ENCODE measurements at regions of chr12 and their contacts with region 1.

Region 1: DNA sequence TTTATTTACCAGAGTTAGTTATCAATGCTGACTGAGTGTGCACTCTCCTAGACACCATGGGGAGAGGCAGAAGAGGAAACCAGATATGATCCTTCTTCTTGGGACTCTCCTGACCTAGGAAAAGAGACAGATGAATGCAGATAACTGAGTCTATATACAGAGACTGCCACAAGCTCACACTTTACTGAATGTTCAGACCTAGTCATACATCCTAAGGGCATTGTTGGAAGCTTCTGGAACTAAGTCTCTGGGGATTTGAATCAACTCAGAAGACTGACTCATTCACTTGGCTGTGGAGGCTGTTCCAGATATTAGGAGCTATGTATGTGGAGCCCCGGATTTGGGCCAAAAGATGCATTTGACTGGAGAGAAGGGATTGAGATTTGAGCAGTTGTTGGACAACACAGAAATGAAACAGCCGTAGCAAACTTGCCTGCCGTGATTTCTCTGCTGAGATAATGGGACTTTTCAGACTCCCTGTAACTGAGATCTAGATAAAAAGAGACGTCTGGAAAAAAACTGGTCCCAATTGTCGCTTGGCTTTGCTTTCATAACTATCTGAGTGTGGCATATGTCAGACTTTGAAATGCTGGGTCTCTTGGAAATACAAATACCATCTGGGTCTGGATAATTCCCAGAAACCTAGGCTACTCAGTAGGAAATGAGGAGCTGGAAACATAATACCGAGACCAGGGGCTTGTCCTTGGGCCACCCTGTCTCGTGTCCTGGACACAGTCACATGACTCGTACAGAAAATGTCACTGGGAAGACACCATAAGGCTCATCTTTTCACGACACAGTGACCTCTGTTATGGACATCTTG is 396.8 kb downstream of the NUAK1 start:
- DNase-seq: peak; percentile 47
- H3K4me3 ChIP-seq: no peak overlapping the region
- H3K27ac ChIP-seq: no peak overlapping the region
- H3K4me1 ChIP-seq: peaks cover 32% of the 10 kb centered on the region
- H3K27me3 ChIP-seq: peaks cover 50 to 60% of the 10 kb centered on the region in 2 experiments
- CTCF ChIP-seq: no peak
- POLR2A ChIP-seq: no peak

Region 2: DNA sequence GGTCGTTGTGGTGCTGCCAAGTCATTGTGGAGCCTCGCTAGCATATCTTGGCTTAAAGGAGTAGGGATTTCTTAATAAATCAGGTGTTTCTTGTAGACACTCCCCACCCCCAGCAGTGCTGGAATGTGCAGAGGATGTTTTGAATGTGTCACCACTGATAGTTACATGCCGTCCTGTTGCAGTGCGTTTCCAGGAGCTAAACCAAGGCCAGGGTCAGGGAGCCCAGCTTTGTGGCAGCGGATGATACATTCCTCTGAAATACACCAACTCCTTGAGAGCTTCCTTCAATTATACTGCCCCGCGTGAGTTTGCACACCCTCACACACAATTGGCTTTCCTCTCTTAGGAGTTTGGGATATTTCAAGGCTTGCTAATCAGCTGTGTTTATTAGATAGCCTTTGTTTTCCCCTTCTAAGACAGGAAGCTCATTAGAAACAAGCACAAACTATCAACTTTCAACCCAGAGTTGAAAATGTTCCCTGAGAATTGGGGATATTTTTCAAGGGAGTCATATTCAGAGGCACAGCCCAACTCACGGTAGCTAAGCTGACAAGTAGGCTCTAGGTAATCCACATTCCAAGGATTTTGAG is 256.5 kb before region 1 on chr12:
- CTCF ChIA-PET with region 1: no interaction called
- POLR2A ChIA-PET with region 1: no interaction called
- dilution Hi-C with region 1: no loop called
- intact Hi-C with region 1: loop called (anchors 1 kb)
- DNase-seq: peak; percentile 99
- H3K4me3 ChIP-seq: no peak overlapping the region
- H3K27ac ChIP-seq: peak overlapping the region; percentile 74
- H3K4me1 ChIP-seq: peaks cover 100% of the 10 kb centered on the region
- H3K27me3 ChIP-seq: no peaks in the 10 kb centered on the region
- CTCF ChIP-seq: no peak
- POLR2A ChIP-seq: peak; percentile 90

Region 3: GRCh38 chr12:105705765-105706164 is 36.2 kb before region 1 on chr12:
- CTCF ChIA-PET with region 1: interaction called, 13 read pairs
- POLR2A ChIA-PET with region 1: no interaction called
- dilution Hi-C with region 1: no loop called
- intact Hi-C with region 1: loop called (anchors 1 kb)
- DNase-seq: peak; percentile 77
- H3K4me3 ChIP-seq: no peak overlapping the region
- H3K27ac ChIP-seq: no peak overlapping the region
- H3K4me1 ChIP-seq: peaks cover 9% of the 10 kb centered on the region
- H3K27me3 ChIP-seq: peaks cover 4 to 7% of the 10 kb centered on the region in 2 experiments
- CTCF ChIP-seq: peak; percentile 63 to 65
- POLR2A ChIP-seq: no peak

Region 4: GRCh38 chr12:105761075-105761474 is 19.1 kb after region 1 on chr12:
- CTCF ChIA-PET with region 1: interaction called, 4 read pairs
- POLR2A ChIA-PET with region 1: no interaction called
- dilution Hi-C with region 1: no loop called
- intact Hi-C with region 1: loop called (anchors 1 kb)
- DNase-seq: peak; percentile 72
- H3K4me3 ChIP-seq: no peak overlapping the region
- H3K27ac ChIP-seq: no peak overlapping the region
- H3K4me1 ChIP-seq: peaks cover 16% of the 10 kb centered on the region
- H3K27me3 ChIP-seq: peaks cover 0 to 23% of the 10 kb centered on the region in 2 experiments
- CTCF ChIP-seq: no peak
- POLR2A ChIP-seq: no peak

Region 5: DNA sequence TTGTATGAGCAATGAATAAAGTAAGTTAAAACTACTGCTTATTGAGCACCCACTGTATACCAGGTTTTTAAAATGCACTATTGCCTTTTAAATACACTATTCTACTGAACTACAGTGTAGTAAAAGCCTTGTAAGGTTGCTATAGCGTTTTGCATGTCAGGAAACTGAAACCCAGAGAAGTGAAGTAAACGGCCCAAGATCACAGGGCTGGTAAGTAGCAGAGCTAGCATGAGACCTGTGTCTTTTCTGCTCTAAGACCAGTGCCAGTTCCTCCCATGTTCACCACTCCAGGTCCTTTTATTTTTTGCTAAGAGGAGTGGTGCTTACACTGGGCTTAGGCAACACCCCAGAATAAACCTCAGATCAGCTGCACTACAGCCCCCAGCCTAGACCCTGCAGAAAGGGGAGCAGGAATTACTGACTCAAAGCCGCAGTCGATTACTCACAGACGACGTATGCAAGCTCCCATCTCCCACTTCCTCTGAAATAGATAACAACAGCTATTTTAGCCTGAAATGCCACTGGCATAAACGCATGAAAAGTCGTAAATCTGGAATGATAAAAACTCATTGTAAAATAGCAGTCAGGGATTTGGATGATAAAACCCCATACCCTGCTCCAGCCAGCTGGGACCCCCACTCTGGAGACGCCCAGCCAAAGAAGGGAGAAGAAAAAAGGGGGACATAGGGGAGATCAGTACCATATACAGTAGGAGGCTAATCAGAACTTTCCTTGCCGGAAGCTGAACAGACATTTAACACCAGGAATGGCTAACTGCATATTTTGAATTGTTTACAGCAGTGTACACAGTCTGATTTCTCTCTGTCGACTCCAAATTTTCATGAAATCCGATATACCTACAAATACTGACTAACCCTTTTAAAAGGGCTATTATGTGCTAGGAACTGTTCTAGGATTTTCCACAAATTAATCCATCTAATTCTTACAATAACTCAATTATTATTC is 288.5 kb after region 1 on chr12:
- CTCF ChIA-PET with region 1: no interaction called
- POLR2A ChIA-PET with region 1: no interaction called
- dilution Hi-C with region 1: no loop called
- intact Hi-C with region 1: loop called (anchors 1 kb)
- DNase-seq: peak; percentile 83
- H3K4me3 ChIP-seq: peak overlapping the region in 1 of 3 experiments; percentile 18
- H3K27ac ChIP-seq: peak overlapping the region; percentile 97
- H3K4me1 ChIP-seq: peaks cover 25% of the 10 kb centered on the region
- H3K27me3 ChIP-seq: no peaks in the 10 kb centered on the region
- CTCF ChIP-seq: no peak
- POLR2A ChIP-seq: no peak

Measured in endothelial cell of umbilical vein (primary cell).